ENCODE measurements at regions of chr5 and their contacts with region 1.

Region 1: DNA sequence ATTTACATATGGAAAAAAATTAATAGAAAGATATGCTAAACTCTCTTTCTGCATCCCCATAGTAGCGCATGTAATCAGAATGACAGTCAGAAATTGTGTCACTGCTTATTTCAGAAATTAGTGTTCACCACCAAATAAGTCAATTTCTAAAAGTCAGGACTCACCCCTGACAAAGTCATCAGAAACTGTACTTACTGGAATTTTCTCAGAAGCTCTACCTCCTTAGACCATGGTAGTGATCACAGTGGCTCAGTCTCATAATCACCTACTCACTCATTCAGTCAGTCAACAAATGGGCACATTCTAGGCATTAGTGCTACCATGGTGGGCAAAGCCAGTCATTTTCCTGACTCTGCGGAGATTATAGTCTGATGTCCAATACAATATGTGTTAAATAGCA is 22.0 kb downstream of the THBS4 start:
- DNase-seq: no peak
- ATAC-seq: no peak
- H3K4me3 ChIP-seq: no peak overlapping the region
- H3K4me3 Mint-ChIP-seq: no peak overlapping the region
- H3K27ac ChIP-seq: no peak overlapping the region
- H3K27ac Mint-ChIP-seq: no peak overlapping the region
- H3K4me1 ChIP-seq: no peaks in the 10 kb centered on the region
- H3K4me1 Mint-ChIP-seq: peaks cover 0 to 12% (median 7%) of the 10 kb centered on the region in 7 donors
- H3K27me3 ChIP-seq: no peaks in the 10 kb centered on the region
- H3K27me3 Mint-ChIP-seq: peaks cover 0 to 3% (median 0%) of the 10 kb centered on the region in 5 donors

Region 2: GRCh38 chr5:79653843-79654242 is 403.3 kb before region 1 on chr5:
- CTCF ChIA-PET with region 1: no interaction called
- POLR2A ChIA-PET with region 1: no interaction called
- intact Hi-C with region 1: no loop called
- DNase-seq: no peak
- ATAC-seq: no peak
- H3K4me3 ChIP-seq: no peak overlapping the region
- H3K4me3 Mint-ChIP-seq: no peak overlapping the region
- H3K27ac ChIP-seq: no peak overlapping the region
- H3K27ac Mint-ChIP-seq: no peak overlapping the region
- H3K4me1 ChIP-seq: no peaks in the 10 kb centered on the region
- H3K4me1 Mint-ChIP-seq: no peaks in the 10 kb centered on the region
- H3K27me3 ChIP-seq: no peaks in the 10 kb centered on the region
- H3K27me3 Mint-ChIP-seq: no peaks in the 10 kb centered on the region

Region 3: DNA sequence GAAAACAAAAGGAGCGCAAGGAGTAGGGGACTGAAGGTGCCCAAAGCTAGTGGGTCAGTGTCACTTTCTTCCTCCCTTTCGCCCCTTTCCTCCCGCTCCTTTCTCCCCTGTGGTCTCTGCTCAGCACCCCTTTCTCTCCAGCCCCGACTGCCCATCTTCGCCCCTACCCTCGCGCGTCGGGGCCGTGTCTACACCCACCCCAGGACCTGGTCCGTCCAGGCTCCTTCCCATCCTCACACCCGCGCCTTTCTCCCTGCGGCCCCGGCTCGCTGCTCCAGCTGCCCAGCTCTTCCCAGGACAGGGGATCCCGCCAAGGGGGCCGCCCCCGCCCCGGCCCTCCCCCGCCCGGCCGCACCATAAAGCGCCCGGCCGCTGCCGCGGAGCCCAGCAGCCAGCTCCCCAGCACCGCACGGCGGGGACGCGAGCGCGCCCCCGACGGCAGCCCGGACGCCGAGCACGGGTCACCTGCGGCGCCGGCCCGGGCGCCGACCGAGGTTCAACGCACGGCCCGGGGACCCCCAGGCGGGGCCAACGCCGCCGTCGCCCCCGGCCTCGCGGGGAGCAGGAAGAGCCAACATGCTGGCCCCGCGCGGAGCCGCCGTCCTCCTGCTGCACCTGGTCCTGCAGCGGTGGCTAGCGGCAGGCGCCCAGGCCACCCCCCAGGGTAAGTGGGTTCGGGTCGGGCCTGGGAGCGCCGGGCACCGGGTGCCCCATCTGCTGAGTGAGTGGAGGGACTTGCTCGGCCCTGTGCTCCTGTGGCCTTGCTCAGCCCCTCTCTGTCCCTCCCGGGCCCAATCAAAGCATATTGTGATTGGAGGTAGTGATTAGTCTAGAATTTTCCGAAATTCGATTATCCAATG is 21.9 kb before region 1 on chr5 and contains the start of gene THBS4:
- CTCF ChIA-PET with region 1: no interaction called
- POLR2A ChIA-PET with region 1: no interaction called
- intact Hi-C with region 1: loop called in 1 of 2 experiments (anchors 1 kb)
- DNase-seq: peak in 1 of 9 donors; percentile 6
- ATAC-seq: no peak
- H3K4me3 ChIP-seq: no peak within 1 kb of the TSS
- H3K4me3 Mint-ChIP-seq: peak within 1 kb of the TSS; percentile 52 to 81 (median 68)
- H3K27ac ChIP-seq: no peak within 1 kb of the TSS
- H3K27ac Mint-ChIP-seq: no peak within 1 kb of the TSS
- H3K4me1 ChIP-seq: peaks cover 0 to 11% of the 10 kb centered on the region in 2 donors
- H3K4me1 Mint-ChIP-seq: peaks cover 0 to 27% (median 18%) of the 10 kb centered on the region in 7 donors
- H3K27me3 ChIP-seq: peaks cover 0 to 17% of the 10 kb centered on the region in 2 donors
- H3K27me3 Mint-ChIP-seq: peaks cover 55 to 73% (median 62%) of the 10 kb centered on the region in 5 donors
- total RNA-seq, gene THBS4: 0.53 to 1.2 (median 0.65) TPM

Region 4: DNA sequence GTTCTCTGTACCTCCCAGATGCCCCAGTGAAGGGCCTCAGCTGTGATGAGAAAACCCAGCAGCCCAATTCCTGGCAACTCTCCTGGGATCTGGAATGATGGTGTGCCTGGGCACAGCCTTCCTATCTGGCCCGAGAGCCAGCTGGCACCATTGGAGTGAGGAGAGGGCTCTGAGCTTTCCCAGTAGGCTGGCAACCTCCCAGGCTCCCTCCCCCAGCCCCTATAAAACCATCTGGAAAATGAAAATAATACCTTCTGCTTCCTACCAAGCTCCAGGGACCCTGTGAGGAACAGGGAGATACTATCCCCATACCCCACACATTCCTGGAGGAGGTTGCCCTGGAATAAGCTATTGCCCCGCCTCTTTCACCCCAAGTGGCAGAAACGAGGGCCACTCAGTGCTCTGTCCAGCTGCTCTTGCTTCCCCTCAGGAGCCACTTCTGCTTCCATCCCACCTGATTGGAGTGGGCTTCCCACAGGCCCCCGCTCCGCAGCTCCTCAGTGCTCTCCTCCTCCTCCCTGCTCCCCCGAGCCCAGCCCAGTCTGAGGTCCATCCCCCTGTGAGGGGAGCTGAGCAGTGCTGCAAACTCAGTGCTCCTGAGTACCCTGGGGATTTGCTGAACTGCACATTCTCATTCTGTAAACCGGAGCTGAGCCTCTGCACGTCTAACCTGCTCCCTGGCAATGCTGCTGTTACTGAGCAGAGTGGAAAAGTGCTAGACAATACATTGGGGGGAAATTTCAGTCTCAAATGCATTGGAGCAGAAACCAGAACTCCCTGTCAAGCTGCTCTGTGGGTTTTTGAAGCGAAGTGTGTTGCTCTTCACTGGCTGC is 52.8 kb after region 1 on chr5:
- CTCF ChIA-PET with region 1: no interaction called
- POLR2A ChIA-PET with region 1: no interaction called
- intact Hi-C with region 1: no loop called
- DNase-seq: no peak
- ATAC-seq: no peak
- H3K4me3 ChIP-seq: no peak overlapping the region
- H3K4me3 Mint-ChIP-seq: peak overlapping the region in 1 of 10 donors; percentile 58
- H3K27ac ChIP-seq: no peak overlapping the region
- H3K27ac Mint-ChIP-seq: peak overlapping the region in 8 of 9 donors; percentile 14 to 84 (median 72)
- H3K4me1 ChIP-seq: peaks cover 0 to 3% of the 10 kb centered on the region in 2 donors
- H3K4me1 Mint-ChIP-seq: peaks cover 3 to 66% (median 45%) of the 10 kb centered on the region in 7 donors
- H3K27me3 ChIP-seq: no peaks in the 10 kb centered on the region
- H3K27me3 Mint-ChIP-seq: no peaks in the 10 kb centered on the region

Region 5: DNA sequence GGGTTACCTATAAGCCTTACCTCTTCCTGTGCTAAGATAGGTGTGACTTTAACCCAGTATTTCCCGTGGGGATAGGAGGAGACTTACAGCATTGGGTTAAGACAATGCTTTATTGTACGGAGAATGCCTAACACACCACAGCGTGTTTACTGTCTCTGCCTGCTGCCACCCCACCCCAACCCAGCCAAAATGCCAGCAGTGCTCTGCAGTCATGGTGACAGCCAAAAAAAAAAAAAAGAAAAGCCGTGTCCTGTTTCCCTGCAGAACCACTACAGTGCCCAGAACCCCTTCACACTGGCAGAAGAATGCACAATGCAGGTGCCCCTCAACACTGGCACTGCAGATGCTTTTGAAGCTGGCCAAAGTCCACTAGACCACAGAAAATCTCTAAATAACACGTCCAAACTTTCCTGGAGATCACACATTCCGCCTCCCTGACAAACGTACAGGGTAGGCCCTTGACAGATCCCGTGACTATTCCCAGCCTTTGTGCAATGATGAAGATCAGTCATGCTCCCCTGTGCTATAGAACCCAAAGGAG is 96.6 kb after region 1 on chr5:
- CTCF ChIA-PET with region 1: no interaction called
- POLR2A ChIA-PET with region 1: no interaction called
- intact Hi-C with region 1: no loop called
- DNase-seq: peak in 7 of 9 donors; percentile 57 to 78 (median 69)
- ATAC-seq: peak; percentile 60
- H3K4me3 ChIP-seq: no peak overlapping the region
- H3K4me3 Mint-ChIP-seq: peak overlapping the region; percentile 48 to 88 (median 80)
- H3K27ac ChIP-seq: peak overlapping the region; percentile 78
- H3K27ac Mint-ChIP-seq: peak overlapping the region; percentile 85 to 100 (median 99)
- H3K4me1 ChIP-seq: peaks cover 9 to 49% of the 10 kb centered on the region in 2 donors
- H3K4me1 Mint-ChIP-seq: peaks cover 17 to 89% (median 72%) of the 10 kb centered on the region in 7 donors
- H3K27me3 ChIP-seq: no peaks in the 10 kb centered on the region
- H3K27me3 Mint-ChIP-seq: no peaks in the 10 kb centered on the region